Caco-2 (cell line): ENCODE measurements at regions of chr7 and their contacts with region 1.

Region 1: GRCh38 chr7:44200647-44201461 is at the start of gene YKT6:
- DNase-seq: peak; percentile 96 to 97
- H3K4me3 ChIP-seq: peak within 1 kb of the TSS; percentile 100
- H3K4me3 Mint-ChIP-seq: peak within 1 kb of the TSS; percentile 82
- H3K27ac Mint-ChIP-seq: peak within 1 kb of the TSS; percentile 61
- H3K4me1 ChIP-seq: peaks cover 9% of the 10 kb centered on the region
- H3K4me1 Mint-ChIP-seq: no peaks in the 10 kb centered on the region
- H3K27me3 ChIP-seq: no peaks in the 10 kb centered on the region
- H3K27me3 Mint-ChIP-seq: no peaks in the 10 kb centered on the region
- CTCF ChIP-seq: peak; percentile 42 to 59
- total RNA-seq, gene YKT6: 117 and 123 TPM in 2 replicates

Region 2: DNA sequence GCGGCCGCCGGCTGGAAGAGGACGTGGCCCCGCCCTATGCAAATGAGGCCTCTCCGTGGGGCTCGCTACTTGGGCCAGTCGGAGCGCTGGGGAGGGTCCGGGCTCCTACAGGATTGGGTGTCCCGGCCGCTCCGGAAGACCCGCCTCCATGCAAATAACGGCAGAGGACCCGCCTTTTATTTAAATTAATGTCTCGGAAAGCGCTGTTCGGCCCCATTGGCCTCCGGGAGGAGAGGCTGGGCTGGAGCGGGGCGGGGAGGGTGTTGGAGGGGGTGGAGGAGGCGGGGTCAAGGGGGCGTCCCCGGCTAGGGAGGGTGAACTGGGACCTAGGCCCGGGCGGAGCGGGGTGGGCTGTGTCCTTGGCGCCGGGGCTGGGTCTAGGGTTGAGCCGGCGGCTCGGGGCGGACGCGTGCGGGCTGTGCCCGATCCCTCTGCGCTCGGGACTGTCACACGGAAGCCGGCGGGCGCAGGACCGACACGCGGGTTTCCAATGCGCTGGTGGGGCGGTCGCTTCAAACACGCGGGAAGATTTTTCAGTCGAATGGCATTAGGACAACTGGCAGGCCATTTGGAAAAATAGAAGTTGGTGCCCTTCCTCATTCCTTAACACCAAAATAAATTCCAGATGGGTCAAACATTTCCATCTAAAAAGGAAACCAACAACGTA is 118.2 kb before region 1 on chr7:
- CTCF ChIA-PET with region 1: no interaction called
- POLR2A ChIA-PET with region 1: no interaction called
- intact Hi-C with region 1: loop called (anchors 5 kb)
- DNase-seq: peak; percentile 99
- H3K4me3 ChIP-seq: peak overlapping the region; percentile 58
- H3K4me3 Mint-ChIP-seq: peak overlapping the region; percentile 78
- H3K27ac Mint-ChIP-seq: peak overlapping the region; percentile 86
- H3K4me1 ChIP-seq: no peaks in the 10 kb centered on the region
- H3K4me1 Mint-ChIP-seq: no peaks in the 10 kb centered on the region
- H3K27me3 ChIP-seq: no peaks in the 10 kb centered on the region
- H3K27me3 Mint-ChIP-seq: no peaks in the 10 kb centered on the region
- CTCF ChIP-seq: no peak

Region 3: GRCh38 chr7:44114586-44115310 is 86.1 kb before region 1 on chr7:
- CTCF ChIA-PET with region 1: interaction called, 12 read pairs
- POLR2A ChIA-PET with region 1: no interaction called
- intact Hi-C with region 1: no loop called
- DNase-seq: no peak
- H3K4me3 ChIP-seq: no peak overlapping the region
- H3K4me3 Mint-ChIP-seq: no peak overlapping the region
- H3K27ac Mint-ChIP-seq: no peak overlapping the region
- H3K4me1 ChIP-seq: no peaks in the 10 kb centered on the region
- H3K4me1 Mint-ChIP-seq: no peaks in the 10 kb centered on the region
- H3K27me3 ChIP-seq: no peaks in the 10 kb centered on the region
- H3K27me3 Mint-ChIP-seq: no peaks in the 10 kb centered on the region
- CTCF ChIP-seq: no peak

Region 4: GRCh38 chr7:44131173-44132029 is 69.5 kb before region 1 on chr7:
- CTCF ChIA-PET with region 1: interaction called, 12 read pairs
- POLR2A ChIA-PET with region 1: no interaction called
- intact Hi-C with region 1: loop called (anchors 1 kb)
- DNase-seq: peak; percentile 83 to 85
- H3K4me3 ChIP-seq: no peak overlapping the region
- H3K4me3 Mint-ChIP-seq: no peak overlapping the region
- H3K27ac Mint-ChIP-seq: no peak overlapping the region
- H3K4me1 ChIP-seq: peaks cover 15% of the 10 kb centered on the region
- H3K4me1 Mint-ChIP-seq: peaks cover 8% of the 10 kb centered on the region
- H3K27me3 ChIP-seq: no peaks in the 10 kb centered on the region
- H3K27me3 Mint-ChIP-seq: no peaks in the 10 kb centered on the region
- CTCF ChIP-seq: peak; percentile 42 to 83

Region 5: GRCh38 chr7:44257618-44258422 is 57.0 kb after region 1 on chr7:
- CTCF ChIA-PET with region 1: no interaction called
- POLR2A ChIA-PET with region 1: no interaction called
- intact Hi-C with region 1: no loop called
- DNase-seq: no peak
- H3K4me3 ChIP-seq: no peak overlapping the region
- H3K4me3 Mint-ChIP-seq: no peak overlapping the region
- H3K27ac Mint-ChIP-seq: no peak overlapping the region
- H3K4me1 ChIP-seq: peaks cover 9% of the 10 kb centered on the region; the same call in 1 of the 2 replicates
- H3K4me1 Mint-ChIP-seq: no peaks in the 10 kb centered on the region
- H3K27me3 ChIP-seq: no peaks in the 10 kb centered on the region
- H3K27me3 Mint-ChIP-seq: no peaks in the 10 kb centered on the region
- CTCF ChIP-seq: no peak

Region 6: DNA sequence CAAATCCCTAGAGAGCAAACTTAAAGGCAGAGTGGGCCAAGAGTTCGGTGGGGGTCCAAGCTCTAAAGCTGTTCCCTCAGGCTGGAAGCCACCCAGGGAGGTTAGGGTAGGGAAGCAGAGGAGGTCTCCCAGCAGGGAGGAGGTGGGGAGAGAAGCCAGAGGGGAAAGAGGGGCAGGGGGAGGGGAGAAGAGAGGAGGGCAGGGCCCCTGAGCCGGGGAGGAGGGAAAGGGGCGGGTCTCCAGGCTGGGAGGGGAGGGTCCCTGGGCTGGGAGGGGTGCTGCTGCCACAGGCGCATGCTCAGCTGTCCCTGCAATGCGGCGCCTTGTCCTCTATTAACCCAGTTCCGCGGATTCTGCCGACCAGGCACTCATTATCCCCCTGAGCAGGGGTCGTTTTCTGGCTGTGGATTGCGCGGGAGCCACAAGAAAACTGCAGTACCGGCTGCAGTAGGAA is 75.1 kb after region 1 on chr7:
- CTCF ChIA-PET with region 1: no interaction called
- POLR2A ChIA-PET with region 1: no interaction called
- intact Hi-C with region 1: no loop called
- DNase-seq: peak in 1 of 2 experiments; percentile 19
- H3K4me3 ChIP-seq: no peak overlapping the region
- H3K4me3 Mint-ChIP-seq: no peak overlapping the region
- H3K27ac Mint-ChIP-seq: no peak overlapping the region
- H3K4me1 ChIP-seq: no peaks in the 10 kb centered on the region
- H3K4me1 Mint-ChIP-seq: no peaks in the 10 kb centered on the region
- H3K27me3 ChIP-seq: no peaks in the 10 kb centered on the region
- H3K27me3 Mint-ChIP-seq: no peaks in the 10 kb centered on the region
- CTCF ChIP-seq: no peak